ENCODE measurements at regions of chr6 and their contacts with region 1.

Region 1: DNA sequence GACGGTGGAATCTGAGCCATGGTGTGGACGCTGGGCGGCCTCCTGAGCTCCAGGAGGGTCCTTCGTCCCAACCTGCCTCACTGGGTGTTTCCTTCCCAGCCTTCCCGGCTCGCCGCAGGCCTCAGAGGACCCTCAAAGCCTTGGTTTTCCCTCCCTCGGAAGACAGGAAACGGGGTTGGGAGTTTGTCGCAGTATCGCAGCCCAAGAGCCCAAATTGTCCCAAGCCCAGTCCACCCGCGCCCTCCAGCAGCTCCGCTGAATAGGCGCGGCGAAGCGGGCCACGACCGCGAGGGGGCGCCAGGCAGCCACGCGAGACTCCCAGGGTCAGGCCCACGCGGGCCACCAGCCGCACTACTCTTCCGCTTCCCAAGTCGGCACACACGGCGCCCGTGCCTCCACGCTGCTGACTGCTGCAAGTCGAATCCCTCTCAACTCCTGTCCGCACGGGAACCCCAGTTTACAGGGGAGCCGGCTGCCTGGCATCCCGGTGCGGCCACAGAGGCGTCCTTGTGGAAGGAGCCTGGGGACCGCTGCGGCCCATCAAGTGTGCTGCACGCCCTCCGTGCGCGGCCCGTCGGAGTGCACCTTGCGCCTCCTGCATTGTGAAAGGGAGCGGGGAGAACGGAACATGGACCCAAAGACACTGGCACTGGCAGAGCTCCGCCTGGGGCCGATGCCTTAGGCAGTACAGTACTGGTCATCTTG is 40.4 kb upstream of the HMGA1 start:
- DNase-seq: peak; percentile 4
- H3K4me3 ChIP-seq: peak overlapping the region; percentile 59
- CTCF ChIP-seq: peak; percentile 97

Region 2: GRCh38 chr6:34161857-34162515 is 34.3 kb before region 1 on chr6:
- CTCF ChIA-PET with region 1: interaction called, 15 read pairs
- POLR2A ChIA-PET with region 1: no interaction called
- DNase-seq: no peak
- H3K4me3 ChIP-seq: no peak overlapping the region
- CTCF ChIP-seq: no peak

Region 3: DNA sequence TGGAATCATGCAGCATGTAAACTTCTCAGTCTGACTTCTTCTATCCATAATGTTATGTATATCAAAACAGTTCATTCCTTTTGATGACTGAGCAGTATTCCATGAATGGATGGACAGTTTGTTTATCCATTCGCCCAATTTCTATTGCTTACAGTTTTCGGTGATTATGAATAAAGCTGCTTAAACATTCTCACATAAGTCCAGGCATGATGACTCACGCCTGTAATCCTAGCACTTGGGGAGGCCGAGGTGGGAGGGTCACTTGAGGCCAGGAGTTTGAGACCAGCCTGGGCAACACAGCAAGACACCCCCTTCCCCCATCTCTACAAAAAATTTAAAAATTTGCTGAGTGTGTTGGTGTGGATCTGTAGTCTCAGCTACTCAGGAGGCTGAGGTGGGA is 17.5 kb after region 1 on chr6:
- CTCF ChIA-PET with region 1: interaction called, 39 read pairs
- POLR2A ChIA-PET with region 1: no interaction called
- DNase-seq: no peak
- H3K4me3 ChIP-seq: no peak overlapping the region
- CTCF ChIP-seq: no peak

Region 4: DNA sequence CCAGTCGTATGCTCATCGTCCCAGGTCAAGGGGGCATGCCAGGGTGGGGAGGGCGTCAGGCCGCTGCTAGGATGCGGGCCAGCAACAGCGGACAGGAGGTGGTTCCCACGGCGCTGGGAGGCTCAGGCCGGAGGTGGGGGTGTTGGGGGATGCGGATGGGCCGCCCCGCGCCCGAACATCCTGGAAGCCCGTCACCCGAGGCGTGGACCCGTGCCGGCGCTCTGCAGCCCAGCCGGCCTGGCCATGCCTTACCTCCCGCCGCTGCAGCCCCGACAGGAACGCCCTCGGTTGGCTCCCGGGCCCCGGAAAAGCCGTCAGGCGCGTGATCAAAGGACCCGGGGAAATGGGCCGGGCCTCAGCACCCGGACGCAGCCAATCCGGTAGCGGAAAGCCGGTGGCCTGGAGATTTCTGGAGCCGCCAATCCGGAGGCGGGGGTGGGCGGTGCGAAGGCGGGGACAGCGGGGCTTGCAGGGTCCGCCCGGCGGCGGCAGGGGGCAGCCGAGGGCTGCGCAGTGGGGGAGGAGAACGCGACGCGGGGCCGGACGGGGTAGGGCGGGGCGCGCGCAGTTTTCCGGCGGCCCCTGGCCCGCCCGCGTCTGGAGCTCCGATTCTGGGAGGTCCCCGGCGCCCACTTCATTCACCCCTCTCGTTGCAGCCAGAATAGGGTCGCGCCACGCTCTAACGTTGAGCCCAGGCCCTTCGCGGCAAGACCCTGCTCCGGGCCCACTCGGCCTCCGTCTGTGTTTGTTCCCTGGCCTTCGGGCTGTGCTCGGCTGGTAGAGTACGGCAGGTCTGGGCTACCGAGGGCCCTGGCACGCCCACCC is 52.7 kb after region 1 on chr6 and contains the start of gene SMIM29:
- CTCF ChIA-PET with region 1: interaction called, 28 read pairs
- POLR2A ChIA-PET with region 1: interaction called, 4 read pairs
- DNase-seq: peak; percentile 57
- H3K4me3 ChIP-seq: peak within 1 kb of the TSS; percentile 87
- CTCF ChIP-seq: peak; percentile 90

Region 5: GRCh38 chr6:34301408-34301807 is 105.1 kb after region 1 on chr6:
- CTCF ChIA-PET with region 1: no interaction called
- POLR2A ChIA-PET with region 1: no interaction called
- DNase-seq: peak; percentile 14
- H3K4me3 ChIP-seq: no peak overlapping the region
- CTCF ChIP-seq: no peak

Region 6: GRCh38 chr6:34425498-34426410 is 229.5 kb after region 1 on chr6 and contains the start of gene RPS10:
- CTCF ChIA-PET with region 1: interaction called, 13 read pairs
- POLR2A ChIA-PET with region 1: interaction called, 3 read pairs
- DNase-seq: peak; percentile 54
- H3K4me3 ChIP-seq: peak within 1 kb of the TSS; percentile 93
- CTCF ChIP-seq: no peak

Region 7: GRCh38 chr6:34610819-34611477 is 414.7 kb after region 1 on chr6:
- CTCF ChIA-PET with region 1: interaction called, 92 read pairs
- POLR2A ChIA-PET with region 1: no interaction called
- DNase-seq: peak; percentile 63
- H3K4me3 ChIP-seq: no peak overlapping the region
- CTCF ChIP-seq: no peak

Measured in AG04449 (cell line).